Colonic mucosa (tissue), 4 donors: ENCODE measurements at regions of chr6 and their contacts with region 1.

Region 1: DNA sequence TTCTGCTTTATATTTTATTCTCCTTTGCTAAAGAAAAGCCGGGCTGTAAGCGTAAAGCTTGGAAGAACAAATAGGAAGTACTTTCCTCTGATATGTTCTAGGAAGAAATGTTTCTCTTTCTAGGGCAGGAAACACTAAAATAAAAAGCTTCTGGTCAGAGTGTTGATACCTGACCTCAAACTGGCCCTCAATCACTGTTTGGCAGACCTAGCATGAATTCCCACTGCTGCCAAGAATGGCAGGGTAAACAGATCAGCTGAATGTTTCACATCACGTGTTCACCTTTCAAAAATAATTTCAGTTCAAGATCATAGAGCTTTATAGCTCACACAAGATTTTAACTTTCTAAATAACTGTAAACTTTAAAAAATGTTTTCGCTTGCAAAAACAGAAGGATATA is 2.9 kb downstream of the MPC1 start:
- DNase-seq: no peak
- H3K4me3 ChIP-seq: no peak overlapping the region
- H3K27ac ChIP-seq: no peak overlapping the region
- H3K4me1 ChIP-seq: peaks cover 3% of the 10 kb centered on the region
- H3K27me3 ChIP-seq: no peaks in the 10 kb centered on the region
- CTCF ChIP-seq: no peak

Region 2: DNA sequence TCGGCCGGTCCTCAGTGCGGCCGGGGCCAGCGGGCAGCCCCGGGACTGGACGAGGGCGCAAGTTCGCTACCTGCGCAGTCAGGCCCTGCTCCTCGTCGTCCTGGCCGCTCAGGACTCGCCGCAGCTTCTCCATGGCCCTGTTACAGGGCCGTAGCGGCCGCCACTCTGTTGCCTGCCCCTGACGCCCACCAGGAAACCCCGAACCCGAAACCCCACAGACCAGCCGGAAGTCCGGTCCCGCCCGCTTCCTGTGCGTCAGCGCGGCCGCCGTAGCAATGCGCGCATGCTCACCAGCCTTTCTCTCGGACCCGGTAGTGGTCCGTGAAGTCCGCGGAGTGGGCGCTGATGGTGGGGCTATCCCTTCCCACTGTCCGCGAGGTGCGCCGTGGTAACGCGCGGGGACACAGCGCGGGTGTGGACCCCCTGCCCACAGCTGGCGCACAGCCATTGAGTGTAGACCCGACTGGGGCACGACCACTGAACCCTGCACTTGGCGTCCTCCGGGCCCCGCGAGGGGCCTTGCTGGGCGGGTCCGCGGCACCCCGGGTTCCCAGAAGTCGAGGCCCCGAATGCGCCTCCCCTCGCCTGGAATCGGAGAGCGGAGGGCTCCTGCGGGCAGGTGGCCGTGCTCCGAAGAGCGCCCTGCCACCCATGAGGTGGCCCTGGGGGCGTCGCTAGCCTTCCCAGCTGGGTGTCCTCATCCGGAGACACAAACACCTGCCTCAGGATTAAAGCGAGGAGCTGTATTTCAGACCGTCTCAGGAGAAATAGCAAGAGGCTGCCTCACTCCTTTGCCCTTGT is 37.3 kb before region 1 on chr6 and contains the start of gene SFT2D1:
- intact Hi-C with region 1: loop called (anchors 5 kb)
- DNase-seq: peak; percentile 88
- H3K4me3 ChIP-seq: peak within 1 kb of the TSS; percentile 84
- H3K27ac ChIP-seq: peak within 1 kb of the TSS; percentile 83
- H3K4me1 ChIP-seq: no peaks in the 10 kb centered on the region
- H3K27me3 ChIP-seq: no peaks in the 10 kb centered on the region
- CTCF ChIP-seq: no peak
- total RNA-seq, gene SFT2D1: 65.0 to 73.3 TPM